Activated CD8-positive, alpha-beta T cell treated with anti-CD3 and anti-CD28 coated beads for 36 hours (primary cell): ENCODE measurements at regions of chr3 and their contacts with region 1.

Region 1: GRCh38 chr3:16600780-16601539 is 4.3 kb downstream of the DAZL start:
- DNase-seq: peak; percentile 92
- ATAC-seq: peak; percentile 45
- H3K4me3 Mint-ChIP-seq: no peak overlapping the region
- H3K27ac Mint-ChIP-seq: no peak overlapping the region
- H3K4me1 Mint-ChIP-seq: peaks cover 19% of the 10 kb centered on the region
- H3K27me3 Mint-ChIP-seq: no peaks in the 10 kb centered on the region
- CTCF ChIP-seq: peak; percentile 94

Region 2: GRCh38 chr3:16589867-16590624 is 10.9 kb before region 1 on chr3:
- CTCF ChIA-PET with region 1: interaction called, 15 read pairs
- POLR2A ChIA-PET with region 1: no interaction called
- intact Hi-C with region 1: no loop called
- DNase-seq: no peak
- ATAC-seq: peak; percentile 70
- H3K4me3 Mint-ChIP-seq: no peak overlapping the region
- H3K27ac Mint-ChIP-seq: no peak overlapping the region
- H3K4me1 Mint-ChIP-seq: peaks cover 15% of the 10 kb centered on the region
- H3K27me3 Mint-ChIP-seq: peaks cover 2% of the 10 kb centered on the region
- CTCF ChIP-seq: no peak

Region 3: GRCh38 chr3:17023006-17023664 is 422.2 kb after region 1 on chr3:
- CTCF ChIA-PET with region 1: interaction called, 4 read pairs
- POLR2A ChIA-PET with region 1: no interaction called
- intact Hi-C with region 1: loop called (anchors 10 kb)
- DNase-seq: peak; percentile 81
- ATAC-seq: peak; percentile 89
- H3K4me3 Mint-ChIP-seq: peak overlapping the region; percentile 71
- H3K27ac Mint-ChIP-seq: peak overlapping the region; percentile 92
- H3K4me1 Mint-ChIP-seq: peaks cover 72% of the 10 kb centered on the region
- H3K27me3 Mint-ChIP-seq: no peaks in the 10 kb centered on the region
- CTCF ChIP-seq: no peak

Region 4: GRCh38 chr3:17233398-17233800 is 632.4 kb after region 1 on chr3:
- CTCF ChIA-PET with region 1: interaction called, 17 read pairs
- POLR2A ChIA-PET with region 1: no interaction called
- intact Hi-C with region 1: loop called (anchors 1 kb)
- DNase-seq: peak; percentile 43
- ATAC-seq: peak; percentile 99
- H3K4me3 Mint-ChIP-seq: no peak overlapping the region
- H3K27ac Mint-ChIP-seq: no peak overlapping the region
- H3K4me1 Mint-ChIP-seq: peaks cover 28% of the 10 kb centered on the region
- H3K27me3 Mint-ChIP-seq: no peaks in the 10 kb centered on the region
- CTCF ChIP-seq: peak; percentile 78